ENCODE measurements at regions of chr15 and their contacts with region 1.

Region 1: DNA sequence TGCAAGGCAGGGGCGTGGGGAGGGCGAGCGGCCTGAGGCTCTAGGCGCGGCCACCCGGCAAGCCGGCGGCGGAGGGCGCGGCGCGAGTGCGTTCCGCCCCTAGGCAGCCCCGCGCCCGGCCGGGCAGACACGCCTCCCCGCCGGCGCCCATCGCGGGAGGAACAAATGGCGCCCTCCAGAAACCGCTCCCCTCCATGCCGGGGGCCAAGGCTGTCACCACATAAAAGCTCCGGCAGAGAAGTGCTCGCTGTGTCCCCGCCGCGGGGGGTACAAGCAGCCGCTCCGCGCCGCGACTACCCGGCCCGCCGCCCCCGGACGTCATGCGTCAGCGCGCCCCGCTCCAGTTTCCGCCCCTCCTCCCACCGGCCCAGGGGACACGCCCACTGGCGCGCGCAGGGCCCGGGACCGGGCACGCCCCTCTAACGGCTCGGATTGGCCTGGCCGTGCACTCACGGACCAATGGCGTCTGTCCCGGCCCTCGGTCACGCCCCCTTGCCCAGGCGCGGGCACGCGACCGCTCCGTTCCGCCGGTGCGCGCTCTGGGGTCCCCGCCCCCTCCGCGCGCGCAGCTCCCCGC is 391 bp upstream of the KLF13 start:
- DNase-seq: peak; percentile 97
- ATAC-seq: peak; percentile 78
- H3K4me3 ChIP-seq: peak overlapping the region; percentile 89
- H3K27ac ChIP-seq: peak overlapping the region; percentile 72
- H3K4me1 ChIP-seq: peaks cover 10% of the 10 kb centered on the region; the same call in 1 of the 2 replicates
- H3K27me3 ChIP-seq: no peaks in the 10 kb centered on the region
- CTCF ChIP-seq: no peak

Region 2: DNA sequence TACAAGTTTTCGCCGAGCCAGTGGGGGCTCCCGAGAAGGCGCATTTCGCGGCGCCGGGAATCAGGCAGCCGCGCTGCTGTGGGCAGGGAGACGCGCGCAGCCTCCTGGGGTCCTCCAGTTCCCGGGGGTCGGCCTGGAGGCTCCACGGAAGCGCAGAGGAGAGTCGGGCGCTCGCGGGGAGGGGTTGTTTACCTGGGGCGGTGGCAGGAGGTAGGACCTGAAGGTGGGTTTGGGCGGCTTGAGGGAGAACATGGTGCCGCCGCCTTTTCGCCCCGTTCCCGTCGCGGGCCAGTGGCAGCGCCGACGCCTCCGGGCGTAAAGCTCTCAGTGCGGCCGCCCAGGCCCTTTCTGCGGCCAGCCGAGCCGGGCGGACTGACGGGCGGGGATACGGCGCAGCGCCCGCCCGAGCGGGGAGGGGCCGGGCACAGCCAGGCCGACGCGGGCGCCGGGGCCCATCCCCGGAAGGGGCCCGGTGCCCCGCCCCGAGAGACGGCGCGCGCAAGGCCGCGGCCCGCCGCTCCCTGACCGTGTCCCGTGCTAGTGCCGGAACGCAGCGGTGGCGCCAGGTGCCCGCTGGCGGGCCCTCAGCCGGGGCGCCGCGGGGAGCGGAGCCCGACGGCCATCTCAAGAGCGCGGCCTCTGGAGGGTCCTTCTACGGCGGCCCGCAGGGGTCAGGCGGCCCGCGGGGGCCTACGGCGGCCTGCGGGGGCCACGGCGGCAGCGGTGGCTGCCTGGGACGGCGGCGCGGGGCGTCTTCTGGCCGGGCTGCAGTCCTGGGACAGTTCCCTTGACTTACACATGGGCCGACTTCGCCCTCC is 334.8 kb before region 1 on chr15 and contains the start of gene MTMR10:
- CTCF ChIA-PET with region 1: no interaction called
- POLR2A ChIA-PET with region 1: no interaction called
- intact Hi-C with region 1: loop called (anchors 2 kb)
- DNase-seq: peak; percentile 85
- ATAC-seq: peak; percentile 92
- H3K4me3 ChIP-seq: peak within 1 kb of the TSS; percentile 100
- H3K27ac ChIP-seq: peak within 1 kb of the TSS; percentile 22; the same call in 1 of the 2 replicates
- H3K4me1 ChIP-seq: peaks cover 20% of the 10 kb centered on the region
- H3K27me3 ChIP-seq: no peaks in the 10 kb centered on the region
- CTCF ChIP-seq: no peak
- total RNA-seq, gene MTMR10: 7.6 and 9.7 TPM in 2 replicates

Region 3: GRCh38 chr15:31254431-31255175 is 71.6 kb before region 1 on chr15:
- CTCF ChIA-PET with region 1: no interaction called
- POLR2A ChIA-PET with region 1: no interaction called
- intact Hi-C with region 1: loop called (anchors 10 kb)
- DNase-seq: peak; percentile 50
- ATAC-seq: peak; percentile 72
- H3K4me3 ChIP-seq: no peak overlapping the region
- H3K27ac ChIP-seq: no peak overlapping the region
- H3K4me1 ChIP-seq: no peaks in the 10 kb centered on the region
- H3K27me3 ChIP-seq: peaks cover 16% of the 10 kb centered on the region
- CTCF ChIP-seq: no peak

Region 4: GRCh38 chr15:31387479-31388118 is 61.4 kb after region 1 on chr15:
- CTCF ChIA-PET with region 1: no interaction called
- POLR2A ChIA-PET with region 1: no interaction called
- intact Hi-C with region 1: loop called (anchors 1 kb)
- DNase-seq: peak; percentile 70
- ATAC-seq: peak; percentile 74
- H3K4me3 ChIP-seq: no peak overlapping the region
- H3K27ac ChIP-seq: peak overlapping the region; percentile 64
- H3K4me1 ChIP-seq: peaks cover 24% of the 10 kb centered on the region
- H3K27me3 ChIP-seq: peaks cover 3% of the 10 kb centered on the region; the same call in 1 of the 2 replicates
- CTCF ChIP-seq: no peak

Region 5: DNA sequence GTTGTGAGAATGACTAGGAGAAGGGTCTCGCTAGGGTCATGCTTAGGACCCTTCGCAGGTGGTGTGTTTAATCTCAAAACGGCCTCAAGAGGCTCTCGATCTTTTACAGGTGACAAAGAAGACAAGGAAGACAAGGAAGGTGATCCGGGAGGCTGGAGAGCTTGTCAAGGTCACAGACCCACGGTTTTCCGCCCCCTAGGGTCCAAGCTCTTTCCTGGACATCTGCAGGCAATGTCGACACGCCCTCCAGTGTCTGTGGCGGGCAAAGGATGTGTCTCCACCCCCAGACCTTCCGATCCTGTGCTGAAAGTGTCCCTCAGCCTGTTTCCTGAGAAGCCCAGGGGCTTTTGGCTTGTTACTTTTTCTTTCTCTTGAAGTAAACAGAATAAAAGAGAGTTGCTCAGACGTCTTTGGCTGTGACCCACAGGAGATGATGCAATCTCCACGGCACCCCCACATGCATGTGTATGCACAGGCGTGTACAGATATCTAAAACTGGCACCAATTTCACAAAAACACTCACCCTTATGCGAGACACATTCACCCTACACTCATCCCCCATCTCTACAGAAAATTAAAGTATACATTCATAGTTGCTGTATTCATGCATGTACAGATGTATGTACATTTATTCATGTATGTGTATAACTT is 109.1 kb after region 1 on chr15:
- CTCF ChIA-PET with region 1: interaction called, 5 read pairs
- POLR2A ChIA-PET with region 1: no interaction called
- intact Hi-C with region 1: loop called (anchors 1 kb)
- DNase-seq: peak; percentile 65
- ATAC-seq: peak; percentile 83
- H3K4me3 ChIP-seq: peak overlapping the region; percentile 21; the same call in 1 of the 2 replicates
- H3K27ac ChIP-seq: no peak overlapping the region
- H3K4me1 ChIP-seq: peaks cover 15% of the 10 kb centered on the region
- H3K27me3 ChIP-seq: no peaks in the 10 kb centered on the region
- CTCF ChIP-seq: peak; percentile 85

Region 6: DNA sequence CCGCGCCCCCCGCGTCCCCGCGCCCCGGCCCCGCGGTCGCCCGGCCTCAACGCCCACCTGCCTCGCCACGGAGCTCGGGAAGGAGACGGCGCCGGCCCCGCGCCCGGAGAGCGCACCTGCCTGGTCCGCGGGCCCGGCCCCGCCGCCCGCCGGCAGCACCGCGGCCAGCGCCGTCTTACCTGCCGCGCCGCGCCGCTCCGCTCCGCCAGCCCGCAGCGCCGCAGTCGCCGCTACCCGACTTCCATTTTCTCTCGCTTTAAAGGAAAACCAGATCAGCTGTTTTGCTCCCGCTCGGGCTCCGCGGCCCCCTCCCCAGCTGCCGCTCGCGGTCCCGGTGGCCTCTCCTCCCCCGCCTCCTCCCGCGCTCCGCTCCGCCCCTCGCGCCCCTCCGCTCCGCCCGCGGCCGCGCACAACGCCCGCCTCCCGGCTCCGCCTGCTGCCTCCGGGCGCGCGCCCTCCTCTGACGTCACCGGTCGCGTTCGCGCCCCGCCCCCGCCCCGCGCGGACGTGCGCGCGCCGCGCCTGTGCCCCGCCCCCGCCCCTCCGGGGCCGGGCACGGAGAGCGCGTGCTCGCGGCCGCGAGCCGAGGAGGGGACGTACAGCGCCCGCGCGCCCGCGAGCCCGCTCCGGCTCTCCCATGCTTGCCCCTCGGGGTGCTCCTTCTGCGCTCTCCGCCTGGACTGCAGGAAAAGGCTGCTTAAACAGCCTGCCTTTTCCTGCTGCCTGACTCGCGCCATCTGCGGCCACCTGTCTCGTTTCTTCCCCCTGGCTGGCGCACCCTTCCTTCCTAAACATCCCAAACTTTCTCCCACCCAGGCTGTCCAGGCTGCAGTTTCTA is 544.3 kb after region 1 on chr15:
- CTCF ChIA-PET with region 1: no interaction called
- POLR2A ChIA-PET with region 1: no interaction called
- intact Hi-C with region 1: loop called (anchors 5 kb)
- DNase-seq: peak; percentile 80
- ATAC-seq: peak; percentile 87
- H3K4me3 ChIP-seq: peak within 1 kb of the TSS; percentile 82
- H3K27ac ChIP-seq: no peak within 1 kb of the TSS
- H3K4me1 ChIP-seq: no peaks in the 10 kb centered on the region; the same call in 1 of the 2 replicates
- H3K27me3 ChIP-seq: peaks cover 14% of the 10 kb centered on the region; the same call in 1 of the 2 replicates
- CTCF ChIP-seq: no peak